ENCODE measurements at regions of chr7 and their contacts with region 1.

Region 1: DNA sequence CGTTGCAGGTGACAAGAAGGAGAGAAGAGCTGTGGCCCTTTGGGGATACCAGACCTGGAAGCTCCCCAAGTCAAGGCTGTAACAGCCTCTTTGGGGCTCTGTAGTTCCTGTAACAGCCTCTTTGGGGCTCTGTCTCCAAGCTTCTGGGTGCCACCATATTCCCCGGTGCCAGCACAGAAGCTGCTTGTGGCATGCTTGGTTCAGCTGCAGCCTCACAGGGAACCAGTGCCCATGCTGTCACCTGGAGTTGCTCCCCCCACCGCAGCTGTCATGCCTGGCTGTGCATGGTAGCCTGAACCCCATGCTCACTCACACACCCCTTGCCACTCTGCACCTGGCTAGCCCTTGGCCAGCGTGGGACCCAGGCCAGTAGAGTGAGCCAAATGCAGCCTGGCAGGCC is 109.1 kb downstream of the ELAPOR2 start:
- DNase-seq: no peak
- H3K4me3 ChIP-seq: no peak overlapping the region
- H3K27ac ChIP-seq: no peak overlapping the region
- H3K4me1 ChIP-seq: peaks cover 0 to 3% of the 10 kb centered on the region in 2 donors
- H3K27me3 ChIP-seq: no peaks in the 10 kb centered on the region
- CTCF ChIP-seq: no peak
- POLR2A ChIP-seq: no peak

Region 2: DNA sequence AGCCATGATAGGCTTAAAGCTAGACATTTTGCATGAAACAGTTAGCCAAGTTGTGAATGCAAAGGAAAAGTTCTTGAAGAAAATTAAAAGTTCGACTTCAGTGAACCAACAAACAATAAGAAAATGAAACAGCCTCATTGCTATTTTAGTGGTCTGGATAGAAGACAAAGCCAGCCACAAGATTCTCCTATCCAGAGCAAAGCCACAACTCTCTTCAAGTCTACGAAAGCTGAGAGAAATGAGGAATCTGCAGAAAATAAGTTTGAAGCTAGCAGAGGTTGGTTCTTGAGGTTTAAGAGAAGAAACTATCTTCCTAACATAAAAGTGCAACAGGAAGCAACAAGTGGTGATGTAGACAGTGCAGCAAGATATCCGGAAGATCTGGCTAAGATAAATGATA is 578.1 kb before region 1 on chr7:
- intact Hi-C with region 1: no loop called
- DNase-seq: no peak
- H3K4me3 ChIP-seq: no peak overlapping the region
- H3K27ac ChIP-seq: no peak overlapping the region
- H3K4me1 ChIP-seq: no peaks in the 10 kb centered on the region
- H3K27me3 ChIP-seq: no peaks in the 10 kb centered on the region
- CTCF ChIP-seq: no peak
- POLR2A ChIP-seq: no peak

Region 3: DNA sequence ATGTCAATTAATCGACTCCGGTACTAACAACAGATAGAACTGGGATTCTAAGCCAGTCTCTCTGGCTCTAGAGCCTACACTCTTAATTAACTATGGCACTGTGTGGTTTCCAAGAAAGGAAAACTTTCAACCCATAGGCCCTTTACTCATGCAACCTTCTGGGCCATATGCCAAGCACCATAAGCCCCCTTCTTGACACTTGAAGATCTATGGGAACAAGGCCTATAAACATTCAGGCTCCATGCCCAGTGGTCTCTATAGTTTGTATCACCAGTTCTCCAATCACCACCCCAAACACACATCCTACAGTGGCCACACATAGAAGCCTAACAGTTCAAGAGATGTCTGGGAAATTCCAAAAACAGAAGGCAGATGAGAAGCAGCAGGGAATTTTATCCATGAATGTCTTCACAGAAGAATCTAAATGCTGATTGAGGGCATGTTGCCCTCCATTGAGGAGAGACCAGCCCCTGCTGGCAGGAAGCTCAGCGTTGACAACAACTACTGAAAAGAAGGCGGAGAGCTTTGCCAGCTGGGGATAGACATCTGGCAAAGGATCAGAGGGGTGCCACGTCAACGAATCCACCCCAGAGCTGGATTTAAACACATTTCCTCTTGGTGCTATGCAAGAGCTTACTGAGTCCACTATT is 242.2 kb before region 1 on chr7:
- intact Hi-C with region 1: loop called (anchors 10 kb)
- DNase-seq: no peak
- H3K4me3 ChIP-seq: no peak overlapping the region
- H3K27ac ChIP-seq: no peak overlapping the region
- H3K4me1 ChIP-seq: no peaks in the 10 kb centered on the region
- H3K27me3 ChIP-seq: no peaks in the 10 kb centered on the region
- CTCF ChIP-seq: no peak
- POLR2A ChIP-seq: no peak